A673 (cell line): ENCODE measurements at regions of chr4 and their contacts with region 1.

Region 1: GRCh38 chr4:105471566-105472176 is 2.2 kb downstream of the PPA2 start:
- DNase-seq: peak; percentile 86
- H3K4me3 ChIP-seq: peak overlapping the region; percentile 90
- H3K27ac ChIP-seq: peak overlapping the region; percentile 96
- H3K4me1 ChIP-seq: peaks cover 18% of the 10 kb centered on the region
- H3K27me3 ChIP-seq: no peaks in the 10 kb centered on the region
- CTCF ChIP-seq: peak; percentile 78

Region 2: GRCh38 chr4:104868958-104869357 is 602.7 kb before region 1 on chr4:
- CTCF ChIA-PET with region 1: no interaction called
- POLR2A ChIA-PET with region 1: no interaction called
- intact Hi-C with region 1: loop called (anchors 5 kb)
- DNase-seq: no peak
- H3K4me3 ChIP-seq: no peak overlapping the region
- H3K27ac ChIP-seq: no peak overlapping the region
- H3K4me1 ChIP-seq: no peaks in the 10 kb centered on the region
- H3K27me3 ChIP-seq: no peaks in the 10 kb centered on the region
- CTCF ChIP-seq: no peak

Region 3: DNA sequence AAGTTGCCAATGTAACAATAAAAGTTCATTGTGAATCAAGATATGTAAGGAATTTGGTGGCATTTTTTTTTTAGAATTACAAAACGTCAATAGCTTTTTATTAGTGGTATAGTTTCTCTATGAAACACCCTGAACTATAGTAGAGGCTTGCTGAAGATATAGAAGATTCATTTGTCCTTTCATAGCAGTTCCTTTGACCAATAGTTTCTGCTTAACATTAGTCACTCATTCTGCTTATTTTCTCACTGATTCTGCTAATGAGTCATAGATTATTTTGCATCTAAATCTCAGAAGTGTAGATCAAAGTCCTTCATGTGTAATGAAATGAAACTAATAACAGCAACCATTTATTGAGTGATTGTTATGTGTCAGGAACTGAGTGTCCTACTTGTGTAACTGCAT is 530.0 kb before region 1 on chr4:
- CTCF ChIA-PET with region 1: no interaction called
- POLR2A ChIA-PET with region 1: no interaction called
- intact Hi-C with region 1: no loop called
- DNase-seq: no peak
- H3K4me3 ChIP-seq: no peak overlapping the region
- H3K27ac ChIP-seq: no peak overlapping the region
- H3K4me1 ChIP-seq: no peaks in the 10 kb centered on the region
- H3K27me3 ChIP-seq: no peaks in the 10 kb centered on the region
- CTCF ChIP-seq: no peak

Region 4: DNA sequence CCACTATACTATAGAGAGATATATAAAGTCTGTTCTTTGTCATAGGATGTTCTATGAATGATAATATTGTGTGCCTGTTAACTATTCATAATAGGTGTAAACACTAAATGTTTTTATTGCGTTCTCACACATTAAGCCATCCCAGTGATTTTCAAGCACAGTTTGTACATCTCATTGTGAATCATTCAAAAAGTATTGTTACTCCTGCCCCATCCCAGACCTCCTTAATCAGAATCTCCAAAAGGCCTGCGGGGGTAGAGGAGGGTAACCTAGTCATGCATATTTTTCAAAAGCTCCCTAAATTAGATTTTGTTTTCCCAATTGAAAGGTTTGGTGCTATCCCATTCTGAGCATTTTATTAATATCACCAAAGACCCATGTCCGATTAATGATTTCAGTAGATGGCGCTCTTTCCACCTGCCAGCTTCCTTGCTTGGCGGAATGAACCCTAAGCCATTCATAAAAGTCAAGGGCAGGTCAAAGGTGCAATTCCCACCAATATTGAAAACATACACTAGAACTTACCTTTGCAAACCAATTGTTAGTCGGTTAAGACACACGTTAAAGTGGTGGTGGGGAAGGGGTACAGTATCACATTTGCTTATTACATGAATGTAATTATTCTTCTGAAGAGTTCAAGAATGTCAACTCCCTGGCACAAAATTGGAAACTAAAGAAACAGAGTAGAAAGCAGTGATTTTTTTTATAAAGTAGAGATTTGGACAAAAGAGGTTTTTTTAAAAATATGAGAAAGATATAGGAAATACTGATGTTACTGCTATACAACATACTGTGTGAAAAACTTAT is 330.8 kb before region 1 on chr4:
- CTCF ChIA-PET with region 1: no interaction called
- POLR2A ChIA-PET with region 1: no interaction called
- intact Hi-C with region 1: loop called (anchors 1 kb)
- DNase-seq: peak; percentile 47
- H3K4me3 ChIP-seq: no peak overlapping the region
- H3K27ac ChIP-seq: no peak overlapping the region
- H3K4me1 ChIP-seq: peaks cover 16% of the 10 kb centered on the region
- H3K27me3 ChIP-seq: no peaks in the 10 kb centered on the region
- CTCF ChIP-seq: peak; percentile 83

Region 5: GRCh38 chr4:105683038-105683437 is 211.4 kb after region 1 on chr4:
- CTCF ChIA-PET with region 1: no interaction called
- POLR2A ChIA-PET with region 1: no interaction called
- intact Hi-C with region 1: no loop called
- DNase-seq: no peak
- H3K4me3 ChIP-seq: no peak overlapping the region
- H3K27ac ChIP-seq: no peak overlapping the region
- H3K4me1 ChIP-seq: peaks cover 2% of the 10 kb centered on the region
- H3K27me3 ChIP-seq: no peaks in the 10 kb centered on the region
- CTCF ChIP-seq: no peak

Region 6: GRCh38 chr4:106478152-106478551 is 1006.5 kb after region 1 on chr4:
- CTCF ChIA-PET with region 1: no interaction called
- POLR2A ChIA-PET with region 1: no interaction called
- intact Hi-C with region 1: no loop called
- DNase-seq: no peak
- H3K4me3 ChIP-seq: no peak overlapping the region
- H3K27ac ChIP-seq: no peak overlapping the region
- H3K4me1 ChIP-seq: no peaks in the 10 kb centered on the region
- H3K27me3 ChIP-seq: no peaks in the 10 kb centered on the region
- CTCF ChIP-seq: no peak